ENCODE measurements at regions of chr2 and their contacts with region 1.

Region 1: GRCh38 chr2:84925724-84926376 is 20.4 kb downstream of the TMSB10 start:
- DNase-seq: peak; percentile 95 to 98 (median 98)
- H3K4me3 ChIP-seq: peak overlapping the region; percentile 81
- H3K4me3 Mint-ChIP-seq: peak overlapping the region; percentile 91 to 99 (median 96)
- H3K27ac ChIP-seq: no peak overlapping the region
- H3K27ac Mint-ChIP-seq: peak overlapping the region; percentile 90 to 94 (median 91)
- H3K4me1 ChIP-seq: peaks cover 29% of the 10 kb centered on the region
- H3K4me1 Mint-ChIP-seq: peaks cover 28 to 34% (median 33%) of the 10 kb centered on the region in 3 donors
- H3K27me3 ChIP-seq: no peaks in the 10 kb centered on the region
- H3K27me3 Mint-ChIP-seq: peaks cover 0 to 1% of the 10 kb centered on the region in 2 donors

Region 2: GRCh38 chr2:84492571-84492970 is 433.3 kb before region 1 on chr2:
- CTCF ChIA-PET with region 1: interaction called, 29 read pairs
- POLR2A ChIA-PET with region 1: no interaction called
- DNase-seq: no peak
- H3K4me3 ChIP-seq: no peak overlapping the region
- H3K4me3 Mint-ChIP-seq: no peak overlapping the region
- H3K27ac ChIP-seq: no peak overlapping the region
- H3K27ac Mint-ChIP-seq: no peak overlapping the region
- H3K4me1 ChIP-seq: peaks cover 5% of the 10 kb centered on the region
- H3K4me1 Mint-ChIP-seq: peaks cover 6 to 12% (median 8%) of the 10 kb centered on the region in 3 donors
- H3K27me3 ChIP-seq: no peaks in the 10 kb centered on the region
- H3K27me3 Mint-ChIP-seq: peaks cover 3 to 11% of the 10 kb centered on the region in 2 donors

Region 3: DNA sequence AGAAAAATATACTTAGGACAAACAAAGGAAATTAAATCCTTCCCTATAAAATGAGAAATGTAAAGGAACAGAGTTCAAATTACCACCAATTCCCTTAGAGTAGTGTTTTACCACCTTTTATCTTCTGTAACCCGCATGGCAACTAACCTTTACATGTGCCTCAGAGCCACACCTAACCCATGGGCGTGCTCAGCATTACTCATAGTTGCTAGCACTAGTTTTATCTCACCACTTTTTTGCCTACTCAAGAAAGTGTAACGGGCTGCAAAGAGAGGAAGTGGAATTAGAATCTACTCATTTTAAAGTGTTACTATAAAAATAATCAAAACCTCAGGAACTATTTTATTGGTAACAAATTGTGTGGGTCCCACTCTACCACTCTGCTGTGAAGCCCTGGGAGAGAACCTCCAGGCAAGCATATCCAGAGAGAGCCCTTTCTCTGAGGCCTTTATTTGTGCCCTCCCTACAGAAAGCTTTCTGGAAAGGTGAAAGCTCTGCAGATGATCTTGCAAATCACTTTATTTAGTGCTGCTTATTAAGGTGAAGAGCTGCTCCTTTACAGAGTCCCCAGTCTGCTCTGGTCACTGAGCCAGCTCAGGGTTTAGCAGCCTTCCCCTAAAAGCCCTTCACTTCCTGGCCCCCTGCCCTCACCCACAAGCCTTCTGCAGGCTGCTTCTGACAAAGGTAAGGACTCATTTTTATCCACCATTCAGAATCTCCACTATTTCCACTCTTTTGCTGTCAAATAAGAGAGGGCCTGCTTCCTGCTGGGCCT is 143.7 kb before region 1 on chr2:
- CTCF ChIA-PET with region 1: interaction called, 10 read pairs
- POLR2A ChIA-PET with region 1: no interaction called
- DNase-seq: peak; percentile 16 to 79 (median 52)
- H3K4me3 ChIP-seq: peak overlapping the region; percentile 12
- H3K4me3 Mint-ChIP-seq: peak overlapping the region; percentile 35 to 82 (median 74)
- H3K27ac ChIP-seq: peak overlapping the region; percentile 48
- H3K27ac Mint-ChIP-seq: peak overlapping the region; percentile 82 to 98 (median 92)
- H3K4me1 ChIP-seq: peaks cover 70% of the 10 kb centered on the region
- H3K4me1 Mint-ChIP-seq: peaks cover 76 to 91% (median 87%) of the 10 kb centered on the region in 3 donors
- H3K27me3 ChIP-seq: no peaks in the 10 kb centered on the region
- H3K27me3 Mint-ChIP-seq: peaks cover 0 to 2% of the 10 kb centered on the region in 2 donors

Region 4: DNA sequence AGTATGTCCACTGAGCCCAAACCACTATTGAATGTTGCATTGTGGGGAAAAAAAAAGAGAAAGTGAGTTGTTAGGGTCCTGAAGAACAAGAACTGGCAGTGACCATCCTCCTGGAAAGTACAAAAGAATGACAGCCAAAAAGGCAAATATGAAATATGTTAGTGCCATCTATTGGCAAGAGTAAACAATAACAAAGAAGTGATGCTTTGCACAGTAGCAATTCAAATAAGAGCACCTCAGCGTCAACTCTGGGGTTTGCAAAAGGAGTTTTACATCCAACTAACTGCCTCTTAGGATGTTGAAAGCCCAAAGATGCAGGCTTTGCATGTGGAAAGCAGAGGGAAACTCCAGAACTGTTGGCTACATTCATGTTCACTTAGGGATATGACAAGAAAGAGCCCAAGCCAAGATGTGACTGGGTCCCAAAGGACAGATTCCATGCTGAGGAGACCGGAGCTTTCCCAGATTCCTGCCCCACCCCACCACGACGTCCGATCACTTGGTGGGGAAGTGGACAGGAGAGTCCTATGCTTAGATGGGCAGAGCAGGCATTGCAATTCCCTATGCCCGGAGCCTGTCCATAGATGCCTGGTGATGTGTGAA is 60.6 kb before region 1 on chr2:
- CTCF ChIA-PET with region 1: interaction called, 35 read pairs
- POLR2A ChIA-PET with region 1: no interaction called
- DNase-seq: peak in 2 of 5 donors; percentile 50 to 58
- H3K4me3 ChIP-seq: no peak overlapping the region
- H3K4me3 Mint-ChIP-seq: peak overlapping the region in 2 of 7 donors; percentile 8 to 66
- H3K27ac ChIP-seq: no peak overlapping the region
- H3K27ac Mint-ChIP-seq: peak overlapping the region; percentile 41 to 88 (median 70)
- H3K4me1 ChIP-seq: peaks cover 72% of the 10 kb centered on the region
- H3K4me1 Mint-ChIP-seq: peaks cover 54 to 82% (median 63%) of the 10 kb centered on the region in 3 donors
- H3K27me3 ChIP-seq: no peaks in the 10 kb centered on the region
- H3K27me3 Mint-ChIP-seq: no peaks in the 10 kb centered on the region

Region 5: GRCh38 chr2:84894758-84895520 is 30.9 kb before region 1 on chr2:
- CTCF ChIA-PET with region 1: interaction called, 160 read pairs
- POLR2A ChIA-PET with region 1: interaction called, 7 read pairs
- DNase-seq: peak in 1 of 5 donors; percentile 54
- H3K4me3 ChIP-seq: peak overlapping the region; percentile 7
- H3K4me3 Mint-ChIP-seq: peak overlapping the region in 6 of 7 donors; percentile 32 to 74 (median 34)
- H3K27ac ChIP-seq: no peak overlapping the region
- H3K27ac Mint-ChIP-seq: peak overlapping the region; percentile 12 to 98 (median 85)
- H3K4me1 ChIP-seq: peaks cover 53% of the 10 kb centered on the region
- H3K4me1 Mint-ChIP-seq: peaks cover 48 to 70% (median 61%) of the 10 kb centered on the region in 3 donors
- H3K27me3 ChIP-seq: no peaks in the 10 kb centered on the region
- H3K27me3 Mint-ChIP-seq: no peaks in the 10 kb centered on the region

Region 6: GRCh38 chr2:84939426-84940087 is 13.7 kb after region 1 on chr2:
- CTCF ChIA-PET with region 1: interaction called, 97 read pairs
- POLR2A ChIA-PET with region 1: interaction called, 19 read pairs
- DNase-seq: peak; percentile 57 to 82 (median 70)
- H3K4me3 ChIP-seq: peak overlapping the region; percentile 54
- H3K4me3 Mint-ChIP-seq: peak overlapping the region; percentile 39 to 91 (median 81)
- H3K27ac ChIP-seq: peak overlapping the region; percentile 47
- H3K27ac Mint-ChIP-seq: peak overlapping the region; percentile 92 to 100 (median 97)
- H3K4me1 ChIP-seq: peaks cover 21% of the 10 kb centered on the region
- H3K4me1 Mint-ChIP-seq: peaks cover 21 to 36% (median 36%) of the 10 kb centered on the region in 3 donors
- H3K27me3 ChIP-seq: no peaks in the 10 kb centered on the region
- H3K27me3 Mint-ChIP-seq: no peaks in the 10 kb centered on the region

Region 7: GRCh38 chr2:84970868-84971509 is 45.1 kb after region 1 on chr2 and contains the start of gene KCMF1:
- CTCF ChIA-PET with region 1: interaction called, 35 read pairs
- POLR2A ChIA-PET with region 1: interaction called, 19 read pairs
- DNase-seq: peak; percentile 61 to 78 (median 66)
- H3K4me3 ChIP-seq: peak within 1 kb of the TSS; percentile 82
- H3K4me3 Mint-ChIP-seq: peak within 1 kb of the TSS; percentile 92 to 100 (median 95)
- H3K27ac ChIP-seq: peak within 1 kb of the TSS; percentile 88
- H3K27ac Mint-ChIP-seq: peak within 1 kb of the TSS; percentile 97 to 100 (median 98)
- H3K4me1 ChIP-seq: peaks cover 53% of the 10 kb centered on the region
- H3K4me1 Mint-ChIP-seq: peaks cover 49 to 67% (median 64%) of the 10 kb centered on the region in 3 donors
- H3K27me3 ChIP-seq: no peaks in the 10 kb centered on the region
- H3K27me3 Mint-ChIP-seq: peaks cover 0 to 4% of the 10 kb centered on the region in 2 donors
- total RNA-seq, gene KCMF1: 98.1 to 105 TPM

Region 8: DNA sequence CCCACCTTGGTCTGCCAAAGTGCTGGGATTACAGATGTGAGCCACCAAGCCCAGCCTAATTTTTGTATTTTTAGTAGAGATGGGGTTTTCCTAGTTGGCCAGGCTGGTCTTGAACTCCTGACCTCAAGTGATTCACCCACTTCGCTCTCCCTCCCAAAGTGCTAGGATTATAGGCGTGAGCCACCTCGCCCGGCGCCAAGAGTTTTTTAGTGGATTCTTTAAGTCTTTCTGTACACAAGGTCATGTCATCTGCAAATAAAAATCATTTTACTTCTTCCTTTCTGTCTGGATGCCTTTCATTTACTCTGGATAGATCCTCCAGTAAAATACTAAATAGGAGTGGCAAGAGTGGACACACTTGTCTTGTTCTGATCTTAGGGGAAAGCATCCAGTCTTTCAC is 106.8 kb after region 1 on chr2:
- CTCF ChIA-PET with region 1: no interaction called
- POLR2A ChIA-PET with region 1: no interaction called
- DNase-seq: no peak
- H3K4me3 ChIP-seq: no peak overlapping the region
- H3K4me3 Mint-ChIP-seq: no peak overlapping the region
- H3K27ac ChIP-seq: no peak overlapping the region
- H3K27ac Mint-ChIP-seq: peak overlapping the region in 1 of 8 donors; percentile 32
- H3K4me1 ChIP-seq: no peaks in the 10 kb centered on the region
- H3K4me1 Mint-ChIP-seq: peaks cover 16 to 44% (median 33%) of the 10 kb centered on the region in 3 donors
- H3K27me3 ChIP-seq: no peaks in the 10 kb centered on the region
- H3K27me3 Mint-ChIP-seq: no peaks in the 10 kb centered on the region